Common myeloid progenitor, CD34-positive (primary cell): ENCODE measurements at regions of chr15 and their contacts with region 1.

Region 1: DNA sequence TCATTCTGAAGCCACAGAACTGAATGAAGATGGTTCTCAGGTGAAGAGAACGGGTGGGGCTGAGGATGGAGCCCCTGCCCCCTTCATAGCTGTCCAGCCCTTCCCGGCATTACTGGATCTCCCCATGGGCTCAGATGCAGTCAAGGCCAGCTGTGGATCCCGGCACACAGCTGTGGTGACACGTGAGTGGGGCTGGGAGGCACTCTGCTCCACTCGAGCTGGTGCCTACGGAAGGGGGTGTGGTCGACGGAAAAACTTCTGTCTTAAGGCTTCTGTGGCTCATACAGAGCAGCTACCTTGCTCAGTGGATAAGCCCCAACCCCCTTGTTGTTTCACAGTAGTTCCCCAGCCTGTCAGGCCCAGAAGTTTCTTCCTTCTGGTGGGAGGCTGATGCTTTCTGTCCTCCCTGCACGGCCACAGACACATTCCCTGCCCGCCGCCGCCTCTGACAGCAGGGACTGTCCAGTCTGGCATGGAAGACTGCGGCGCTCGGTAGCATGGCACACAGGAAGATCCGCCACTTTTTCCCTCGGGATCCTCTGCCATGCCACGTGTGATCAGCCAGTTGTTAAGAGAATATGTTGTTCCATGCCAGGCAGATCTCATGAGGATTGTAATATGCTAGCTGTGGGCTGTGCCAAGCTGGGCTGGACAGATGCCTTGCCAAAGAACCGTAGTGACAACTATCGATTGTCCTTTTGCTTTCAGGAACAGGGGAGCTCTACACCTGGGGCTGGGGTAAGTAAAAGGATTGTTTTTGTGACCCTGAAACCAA is 5.8 kb downstream of the RCCD1 start:
- DNase-seq: no peak
- H3K4me3 ChIP-seq: no peak overlapping the region
- H3K27ac ChIP-seq: no peak overlapping the region
- H3K4me1 ChIP-seq: peaks cover 2 to 20% (median 14%) of the 10 kb centered on the region in 4 experiments
- H3K27me3 ChIP-seq: no peaks in the 10 kb centered on the region

Region 2: GRCh38 chr15:91032919-91033803 is 72.7 kb after region 1 on chr15:
- CTCF ChIA-PET with region 1: interaction called, 23 read pairs
- POLR2A ChIA-PET with region 1: interaction called, 3 read pairs
- DNase-seq: peak; percentile 38 to 63 (median 62)
- H3K4me3 ChIP-seq: peak overlapping the region in 2 of 7 experiments; percentile 11 to 48
- H3K27ac ChIP-seq: no peak overlapping the region
- H3K4me1 ChIP-seq: peaks cover 0 to 4% (median 1%) of the 10 kb centered on the region in 4 experiments
- H3K27me3 ChIP-seq: peaks cover 0 to 2% (median 0%) of the 10 kb centered on the region in 5 experiments